ENCODE measurements at regions of chr6 and their contacts with region 1.

Region 1: DNA sequence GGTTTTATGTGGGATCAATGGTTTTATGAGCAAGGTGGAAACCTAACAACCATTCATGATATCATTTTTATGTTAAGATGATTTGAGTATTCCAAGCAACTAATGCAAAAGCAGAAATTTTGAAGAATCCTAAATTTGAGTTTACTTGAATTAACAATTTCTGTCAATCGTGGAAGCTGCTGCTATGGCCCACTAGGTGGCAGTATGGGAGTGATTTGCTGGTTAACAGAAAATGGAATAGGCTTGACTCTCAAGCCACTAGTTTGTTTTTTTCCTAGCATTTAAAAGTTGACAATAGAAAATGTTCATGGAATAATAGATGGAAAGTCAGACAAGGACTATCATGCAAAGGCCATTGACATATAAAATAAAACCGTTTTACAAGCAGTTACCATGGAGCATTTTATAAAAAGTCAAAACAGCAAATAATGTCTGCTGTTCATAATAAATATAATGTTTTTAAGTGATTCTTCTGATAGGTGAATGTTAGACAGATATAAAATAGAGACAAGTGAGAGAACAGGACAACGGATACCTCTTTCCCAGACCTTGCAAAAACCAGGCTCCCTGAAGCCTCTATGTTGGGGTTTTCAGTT is 43.0 kb upstream of the TMEM200A start:
- DNase-seq: peak in 1 of 2 donors; percentile 63
- H3K4me3 ChIP-seq: no peak overlapping the region
- H3K27ac ChIP-seq: no peak overlapping the region
- H3K4me1 ChIP-seq: no peaks in the 10 kb centered on the region
- H3K27me3 ChIP-seq: no peaks in the 10 kb centered on the region
- CTCF ChIP-seq: peak; percentile 51 to 83 (median 75)

Region 2: DNA sequence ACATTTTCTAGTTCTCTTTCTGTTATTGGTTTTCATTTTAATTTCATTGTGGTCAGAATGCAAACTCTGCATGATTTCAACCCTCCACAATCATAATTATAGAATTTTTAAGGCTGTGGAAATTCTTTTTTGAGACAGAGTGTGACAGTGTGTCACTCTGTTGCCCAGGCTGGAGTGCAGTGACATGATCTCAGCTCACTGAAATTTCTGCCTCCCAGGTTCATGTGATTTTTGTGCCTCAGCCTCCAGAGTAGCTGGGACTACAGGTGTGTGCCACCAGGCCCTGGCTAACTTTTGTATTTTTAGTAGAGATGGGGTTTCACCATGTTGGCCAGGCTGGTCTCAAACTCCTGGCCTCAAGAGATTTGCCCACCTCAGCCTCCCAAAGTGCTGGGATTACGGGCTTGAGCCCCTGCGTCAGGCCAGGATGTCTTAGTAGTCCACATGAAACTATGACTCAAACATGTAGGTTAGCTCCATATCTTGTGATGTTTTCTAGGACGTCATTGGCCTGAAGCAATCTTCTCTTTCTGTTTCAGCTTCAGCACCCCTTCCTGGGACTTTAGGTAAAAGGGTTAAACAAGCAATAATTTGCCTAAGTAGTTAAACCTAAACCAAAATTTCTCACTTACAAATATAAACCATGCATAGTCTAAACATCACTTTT is 52.7 kb before region 1 on chr6:
- intact Hi-C with region 1: no loop called
- DNase-seq: no peak
- H3K4me3 ChIP-seq: no peak overlapping the region
- H3K27ac ChIP-seq: no peak overlapping the region
- H3K4me1 ChIP-seq: no peaks in the 10 kb centered on the region
- H3K27me3 ChIP-seq: no peaks in the 10 kb centered on the region
- CTCF ChIP-seq: no peak

Region 3: DNA sequence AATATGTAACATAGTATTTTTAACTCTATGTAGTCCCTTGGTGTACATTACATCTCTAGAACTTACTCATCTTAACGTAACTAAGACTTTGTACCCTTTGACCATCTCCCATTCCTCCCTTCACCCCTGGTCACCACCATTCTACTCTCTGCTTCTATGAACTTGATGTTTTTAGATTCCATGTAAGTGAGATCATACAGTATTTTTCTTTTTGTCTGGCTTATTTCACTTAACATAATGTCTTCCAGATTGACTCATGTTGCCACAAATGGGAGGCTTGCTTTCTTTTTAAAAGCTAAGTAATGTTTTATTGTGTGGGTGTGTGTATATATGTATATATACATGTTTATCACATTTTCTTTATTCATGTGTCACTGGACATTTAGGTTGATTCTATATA is 98.8 kb after region 1 on chr6:
- intact Hi-C with region 1: no loop called
- DNase-seq: no peak
- H3K4me3 ChIP-seq: no peak overlapping the region
- H3K27ac ChIP-seq: no peak overlapping the region
- H3K4me1 ChIP-seq: no peaks in the 10 kb centered on the region
- H3K27me3 ChIP-seq: no peaks in the 10 kb centered on the region
- CTCF ChIP-seq: no peak

Region 4: GRCh38 chr6:130697995-130698535 is 375.3 kb after region 1 on chr6:
- intact Hi-C with region 1: loop called (anchors 2 kb)
- DNase-seq: no peak
- H3K4me3 ChIP-seq: no peak overlapping the region
- H3K27ac ChIP-seq: no peak overlapping the region
- H3K4me1 ChIP-seq: no peaks in the 10 kb centered on the region
- H3K27me3 ChIP-seq: no peaks in the 10 kb centered on the region
- CTCF ChIP-seq: peak; percentile 29 to 64 (median 47)

Region 5: DNA sequence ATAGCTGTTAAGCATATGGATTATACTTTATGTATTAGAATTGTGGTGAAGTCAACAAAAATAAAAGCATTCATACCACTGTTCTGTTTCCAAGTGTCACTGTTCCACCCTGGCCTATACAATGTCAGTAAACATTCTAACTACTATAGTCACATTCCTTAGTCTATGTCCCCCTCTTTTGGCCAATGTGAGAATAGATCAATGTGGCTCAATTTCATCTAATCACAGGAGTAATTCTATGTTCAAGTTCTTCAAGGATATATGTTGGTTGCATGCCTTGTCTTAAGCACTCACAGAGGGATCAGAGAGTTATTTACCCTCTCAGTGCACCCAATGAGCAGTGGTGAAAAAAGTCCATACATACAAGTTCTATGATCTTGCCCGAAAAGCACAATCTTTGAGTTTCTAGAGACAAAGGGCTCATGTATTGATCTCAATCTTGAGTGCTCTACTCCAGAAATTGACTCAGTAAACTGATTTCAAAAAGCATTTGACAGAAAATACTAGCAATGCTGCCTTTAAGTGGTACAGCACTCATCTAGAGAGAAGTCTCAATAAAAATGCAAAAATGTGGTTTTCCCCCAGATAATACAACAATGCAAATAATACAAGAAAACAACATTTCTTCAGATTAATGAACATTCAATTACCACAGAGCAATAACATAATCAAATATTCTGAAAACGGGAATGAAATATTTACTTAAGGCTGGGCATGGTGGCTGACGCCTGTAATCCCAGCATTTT is 521.0 kb after region 1 on chr6:
- intact Hi-C with region 1: loop called (anchors 10 kb)
- DNase-seq: no peak
- H3K4me3 ChIP-seq: no peak overlapping the region
- H3K27ac ChIP-seq: no peak overlapping the region
- H3K4me1 ChIP-seq: no peaks in the 10 kb centered on the region
- H3K27me3 ChIP-seq: no peaks in the 10 kb centered on the region
- CTCF ChIP-seq: peak; percentile 11 to 38 (median 14)

Region 6: GRCh38 chr6:130869681-130870080 is 546.9 kb after region 1 on chr6:
- intact Hi-C with region 1: loop called (anchors 2 kb)
- DNase-seq: no peak
- H3K4me3 ChIP-seq: no peak overlapping the region
- H3K27ac ChIP-seq: no peak overlapping the region
- H3K4me1 ChIP-seq: no peaks in the 10 kb centered on the region
- H3K27me3 ChIP-seq: no peaks in the 10 kb centered on the region
- CTCF ChIP-seq: no peak